ENCODE measurements at regions of chr20 and their contacts with region 1.

Region 1: GRCh38 chr20:20052074-20052970 is at the starts of genes CFAP61 and CRNKL1:
- DNase-seq: peak; percentile 95 to 98 (median 97)
- H3K4me3 ChIP-seq: peak within 1 kb of the TSS; percentile 94
- H3K4me3 Mint-ChIP-seq: peak within 1 kb of the TSS; percentile 98 to 100 (median 99)
- H3K27ac ChIP-seq: peak within 1 kb of the TSS; percentile 92
- H3K27ac Mint-ChIP-seq: peak within 1 kb of the TSS; percentile 95 to 100 (median 98)
- H3K4me1 ChIP-seq: peaks cover 19% of the 10 kb centered on the region
- H3K4me1 Mint-ChIP-seq: peaks cover 27 to 46% (median 41%) of the 10 kb centered on the region in 3 donors
- H3K27me3 ChIP-seq: no peaks in the 10 kb centered on the region
- H3K27me3 Mint-ChIP-seq: peaks cover 4 to 16% of the 10 kb centered on the region in 2 donors
- total RNA-seq, gene CFAP61: not detected
- total RNA-seq, gene CRNKL1: 28.6 to 29.4 TPM

Region 2: DNA sequence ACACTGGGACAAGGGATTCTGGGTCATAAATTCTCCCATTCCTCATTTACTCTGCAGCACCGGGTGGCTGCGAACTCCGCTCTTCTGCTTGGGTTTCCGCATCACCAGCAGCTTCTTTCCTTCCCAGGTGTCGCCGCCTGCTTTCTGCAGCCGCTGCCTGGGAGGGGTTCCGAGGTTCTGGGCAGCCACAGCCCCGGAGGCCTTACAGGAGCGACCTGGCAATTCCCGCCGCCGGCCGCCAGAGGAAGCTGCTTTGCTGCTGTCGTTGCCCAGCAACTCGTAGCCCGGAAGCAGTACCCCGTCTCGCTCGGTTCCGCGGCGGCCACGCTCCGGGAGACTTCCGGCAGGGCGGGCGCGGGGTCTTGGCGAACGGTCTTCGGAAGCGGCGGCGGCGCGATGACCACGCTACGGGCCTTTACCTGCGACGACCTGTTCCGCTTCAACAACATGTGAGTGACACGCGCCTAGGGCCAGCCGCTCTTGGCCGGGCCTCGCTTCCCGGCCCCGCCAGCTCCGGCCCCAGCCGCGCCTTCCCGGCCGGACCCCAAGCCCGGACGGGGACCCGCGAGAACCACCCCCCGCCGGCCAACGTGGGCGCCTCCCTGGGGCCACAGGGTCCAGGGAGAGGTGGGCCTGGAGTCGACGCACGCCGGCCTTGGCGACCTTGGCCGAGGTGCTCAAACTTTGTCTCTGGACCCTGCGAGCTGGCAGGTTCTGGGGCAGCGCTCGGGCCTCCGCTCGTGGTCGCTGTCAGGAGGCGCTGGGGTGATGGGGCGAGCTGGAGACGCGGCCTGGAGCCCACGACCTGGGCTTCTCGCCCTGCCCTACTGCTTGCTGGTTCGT is 35.1 kb before region 1 on chr20 and contains the start of gene NAA20:
- CTCF ChIA-PET with region 1: interaction called, 30 read pairs
- POLR2A ChIA-PET with region 1: interaction called, 26 read pairs
- DNase-seq: peak; percentile 85 to 94 (median 87)
- H3K4me3 ChIP-seq: peak within 1 kb of the TSS; percentile 77
- H3K4me3 Mint-ChIP-seq: peak within 1 kb of the TSS; percentile 88 to 96 (median 92)
- H3K27ac ChIP-seq: peak within 1 kb of the TSS; percentile 68
- H3K27ac Mint-ChIP-seq: peak within 1 kb of the TSS; percentile 93 to 98 (median 94)
- H3K4me1 ChIP-seq: peaks cover 32% of the 10 kb centered on the region
- H3K4me1 Mint-ChIP-seq: peaks cover 43 to 65% (median 50%) of the 10 kb centered on the region in 3 donors
- H3K27me3 ChIP-seq: no peaks in the 10 kb centered on the region
- H3K27me3 Mint-ChIP-seq: peaks cover 0 to 4% of the 10 kb centered on the region in 2 donors
- total RNA-seq, gene NAA20: 98.8 to 99.6 TPM